BJ (cell line): ENCODE measurements at regions of chr2 and their contacts with region 1.

Region 1: DNA sequence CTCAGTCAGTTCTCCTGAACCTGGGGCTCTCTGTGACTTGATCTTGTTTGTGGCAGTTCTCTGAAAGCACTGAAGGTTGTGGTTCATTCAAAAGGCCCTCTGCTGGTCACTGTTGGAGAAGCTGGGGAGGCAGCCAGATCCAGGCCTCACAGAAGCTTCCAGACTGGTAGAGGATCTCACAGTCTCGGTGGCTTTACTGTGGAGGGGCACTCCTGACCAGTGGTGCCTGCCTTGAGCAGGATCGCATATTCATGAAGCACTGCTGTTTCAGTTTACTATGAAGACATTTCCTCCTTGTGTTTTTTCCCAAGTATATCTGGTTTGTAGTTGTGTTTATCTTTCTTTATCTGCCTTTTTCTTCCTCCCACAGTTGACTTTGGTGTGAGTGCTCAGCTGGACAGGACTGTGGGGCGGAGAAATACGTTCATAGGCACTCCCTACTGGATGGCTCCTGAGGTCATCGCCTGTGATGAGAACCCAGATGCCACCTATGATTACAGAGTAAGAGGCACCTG is 133.9 kb downstream of the MAP4K4 start:
- DNase-seq: no peak
- H3K4me3 ChIP-seq: no peak overlapping the region
- H3K27me3 ChIP-seq: no peaks in the 10 kb centered on the region
- CTCF ChIP-seq: peak; percentile 81

Region 2: GRCh38 chr2:101341901-101342624 is 489.3 kb before region 1 on chr2:
- CTCF ChIA-PET with region 1: interaction called, 10 read pairs
- POLR2A ChIA-PET with region 1: no interaction called
- DNase-seq: no peak
- H3K4me3 ChIP-seq: peak overlapping the region; percentile 12; the same call in 1 of the 2 replicates
- H3K27me3 ChIP-seq: no peaks in the 10 kb centered on the region
- CTCF ChIP-seq: peak; percentile 89

Region 3: DNA sequence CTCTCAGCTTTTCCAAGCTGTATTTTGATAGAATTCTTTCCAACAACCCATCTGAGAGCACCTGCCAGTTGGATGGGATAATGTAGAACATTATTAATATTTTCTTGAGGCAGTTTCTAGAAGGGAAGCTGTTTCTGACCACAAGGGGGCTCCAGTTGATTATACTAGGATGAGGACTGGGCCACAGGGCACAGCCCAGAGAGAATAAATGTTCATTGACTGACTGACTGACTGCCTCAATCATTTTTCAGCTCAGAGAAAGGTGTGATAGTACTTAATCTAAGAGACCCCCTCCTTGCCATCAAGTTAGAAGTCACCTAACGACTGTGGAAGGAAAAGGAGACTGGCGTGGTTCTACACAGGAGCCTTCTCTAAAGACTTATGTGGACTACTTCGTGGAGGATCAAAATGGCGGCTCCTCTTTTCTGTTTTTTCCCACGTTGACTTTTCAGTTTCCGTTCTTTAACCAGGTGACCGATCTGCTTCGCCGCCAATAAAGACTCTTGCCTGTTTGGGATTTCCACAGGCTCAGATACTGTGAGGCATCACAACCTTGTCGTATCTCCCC is 412.2 kb before region 1 on chr2:
- CTCF ChIA-PET with region 1: interaction called, 45 read pairs
- POLR2A ChIA-PET with region 1: no interaction called
- DNase-seq: no peak
- H3K4me3 ChIP-seq: no peak overlapping the region
- H3K27me3 ChIP-seq: no peaks in the 10 kb centered on the region
- CTCF ChIP-seq: peak; percentile 78

Region 4: GRCh38 chr2:101518578-101519492 is 312.6 kb before region 1 on chr2:
- CTCF ChIA-PET with region 1: interaction called, 18 read pairs
- POLR2A ChIA-PET with region 1: no interaction called
- DNase-seq: no peak
- H3K4me3 ChIP-seq: no peak overlapping the region
- H3K27me3 ChIP-seq: no peaks in the 10 kb centered on the region
- CTCF ChIP-seq: peak; percentile 58

Region 5: DNA sequence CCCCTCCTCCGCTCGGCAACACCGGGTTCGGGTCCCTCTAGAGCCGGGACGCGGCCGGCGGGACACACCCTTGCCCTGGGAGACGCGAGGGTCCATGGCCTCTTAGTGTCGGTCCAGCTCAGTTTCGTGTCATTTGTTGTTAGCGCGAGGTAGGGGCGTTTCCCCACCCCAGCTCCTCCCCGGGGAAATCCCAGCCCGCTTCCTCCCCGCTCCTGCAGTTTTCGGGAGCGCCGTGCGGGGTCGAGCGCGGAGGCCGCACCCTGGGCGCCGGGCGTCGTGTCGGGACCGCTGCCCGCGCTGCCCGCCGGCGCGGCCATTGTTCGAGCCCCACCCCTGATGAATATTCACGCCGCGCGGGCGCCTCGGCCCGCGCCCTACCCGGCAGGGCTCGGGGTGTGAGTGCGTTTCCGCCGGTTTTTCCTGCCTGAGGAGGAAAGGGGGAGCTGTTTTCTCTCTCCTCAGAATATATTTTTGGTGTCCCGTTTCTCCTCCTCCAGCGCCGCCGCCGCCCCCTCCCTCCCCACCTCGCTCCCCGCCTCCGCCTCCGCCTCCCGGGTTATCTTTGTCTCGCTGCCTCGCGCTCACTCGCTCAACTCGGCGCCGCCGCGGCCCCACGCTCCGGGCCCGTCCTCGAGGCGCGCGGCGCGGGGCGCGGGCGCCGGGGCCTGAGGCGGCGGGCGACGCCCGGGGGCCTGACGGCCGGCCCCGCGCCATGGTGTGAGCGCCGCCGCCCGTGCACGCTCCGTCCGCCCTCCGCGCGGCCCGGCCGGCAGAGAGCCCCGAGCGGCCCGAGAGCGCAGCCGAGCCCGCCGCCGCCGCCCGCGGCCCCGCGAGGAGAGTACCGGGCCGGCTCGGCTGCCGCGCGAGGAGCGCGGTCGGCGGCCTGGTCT is 134.0 kb before region 1 on chr2 and contains the start of gene MAP4K4:
- CTCF ChIA-PET with region 1: interaction called, 10 read pairs
- POLR2A ChIA-PET with region 1: no interaction called
- DNase-seq: no peak
- H3K4me3 ChIP-seq: peak within 1 kb of the TSS; percentile 68
- H3K27me3 ChIP-seq: no peaks in the 10 kb centered on the region
- CTCF ChIP-seq: peak; percentile 43
- polyA plus RNA-seq, gene MAP4K4: 53.5 and 73.4 TPM in 2 replicates

Region 6: DNA sequence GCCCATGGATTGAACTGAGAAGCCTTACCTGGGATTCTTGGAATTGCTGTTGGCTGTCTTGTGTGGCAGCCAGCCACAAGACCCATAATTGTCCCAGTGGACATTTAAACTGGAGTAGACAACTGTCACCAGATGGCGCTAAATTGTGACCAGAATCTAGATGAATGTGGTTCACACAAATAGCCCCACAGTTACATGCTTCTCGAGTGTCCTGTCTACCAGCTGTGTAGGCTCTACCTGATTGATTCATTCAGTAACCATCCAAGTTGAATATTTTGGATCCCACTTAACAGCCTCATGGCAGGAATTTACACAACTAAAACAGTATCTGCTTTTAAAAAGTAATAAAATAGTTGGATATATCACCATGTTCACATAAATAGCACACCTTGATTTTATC is 60.7 kb before region 1 on chr2:
- CTCF ChIA-PET with region 1: interaction called, 19 read pairs
- POLR2A ChIA-PET with region 1: no interaction called
- DNase-seq: no peak
- H3K4me3 ChIP-seq: no peak overlapping the region
- H3K27me3 ChIP-seq: no peaks in the 10 kb centered on the region
- CTCF ChIP-seq: peak; percentile 13; the same call in 1 of the 2 replicates

Region 7: DNA sequence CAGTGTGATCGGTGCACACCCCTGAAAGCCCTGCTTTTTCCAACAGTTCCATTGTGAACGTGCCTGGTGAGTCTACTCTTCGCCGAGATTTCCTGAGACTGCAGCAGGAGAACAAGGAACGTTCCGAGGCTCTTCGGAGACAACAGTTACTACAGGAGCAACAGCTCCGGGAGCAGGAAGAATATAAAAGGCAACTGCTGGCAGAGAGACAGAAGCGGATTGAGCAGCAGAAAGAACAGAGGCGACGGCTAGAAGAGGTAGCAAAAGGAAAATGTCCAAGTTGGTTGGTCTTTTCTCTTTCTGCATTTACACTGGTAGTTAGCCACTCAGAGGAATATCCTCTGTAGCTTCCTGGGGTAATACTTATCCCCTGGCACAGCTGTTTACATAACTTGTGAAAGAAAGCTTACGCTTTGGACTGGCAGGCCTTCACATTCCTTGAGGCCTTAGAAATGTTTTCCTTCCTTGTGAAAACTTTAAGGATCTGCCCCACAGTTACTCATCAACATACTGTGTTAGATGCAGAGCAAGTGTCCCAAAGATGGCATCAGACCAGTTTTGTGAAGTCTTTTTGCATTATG is 12.7 kb after region 1 on chr2:
- CTCF ChIA-PET with region 1: interaction called, 10 read pairs
- POLR2A ChIA-PET with region 1: no interaction called
- DNase-seq: no peak
- H3K4me3 ChIP-seq: no peak overlapping the region
- H3K27me3 ChIP-seq: no peaks in the 10 kb centered on the region
- CTCF ChIP-seq: no peak